ENCODE measurements at regions of chr2 and their contacts with region 1.

Region 1: GRCh38 chr2:31170071-31170698 is 31.9 kb upstream of the GALNT14 start:
- DNase-seq: peak; percentile 60
- H3K4me3 ChIP-seq: no peak overlapping the region
- H3K27ac ChIP-seq: no peak overlapping the region
- H3K4me1 ChIP-seq: no peaks in the 10 kb centered on the region
- H3K27me3 ChIP-seq: no peaks in the 10 kb centered on the region
- CTCF ChIP-seq: peak; percentile 97 to 98

Region 2: DNA sequence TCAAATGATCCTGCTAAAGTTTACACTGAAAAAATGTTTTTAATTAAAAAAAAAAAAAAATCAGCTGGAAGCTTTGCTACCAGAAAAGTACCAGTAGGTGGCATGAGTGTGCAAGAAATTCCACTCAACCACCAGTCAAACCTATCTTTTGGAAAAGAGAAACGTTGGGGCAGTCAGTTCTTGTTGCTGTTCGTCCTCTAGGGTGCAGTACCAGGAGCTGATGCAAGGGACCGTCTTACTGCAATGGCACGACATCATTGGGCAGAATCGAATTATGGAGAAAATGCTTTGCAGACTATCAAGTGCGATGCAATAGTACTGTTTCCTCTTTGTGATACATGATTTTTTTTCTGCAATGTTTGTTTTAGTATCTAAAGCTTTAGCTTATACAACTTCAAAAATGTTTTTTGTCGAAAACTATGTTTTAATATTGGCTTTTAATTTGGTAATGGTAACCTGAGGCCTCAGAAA is 1005.1 kb before region 1 on chr2:
- CTCF ChIA-PET with region 1: interaction called, 7 read pairs
- dilution Hi-C with region 1: no loop called
- in situ Hi-C with region 1: no loop called
- intact Hi-C with region 1: loop called (anchors 10 kb)
- DNase-seq: peak; percentile 80
- H3K4me3 ChIP-seq: no peak overlapping the region
- H3K27ac ChIP-seq: no peak overlapping the region
- H3K4me1 ChIP-seq: peaks cover 5% of the 10 kb centered on the region
- H3K27me3 ChIP-seq: no peaks in the 10 kb centered on the region
- CTCF ChIP-seq: peak; percentile 80 to 91

Region 3: DNA sequence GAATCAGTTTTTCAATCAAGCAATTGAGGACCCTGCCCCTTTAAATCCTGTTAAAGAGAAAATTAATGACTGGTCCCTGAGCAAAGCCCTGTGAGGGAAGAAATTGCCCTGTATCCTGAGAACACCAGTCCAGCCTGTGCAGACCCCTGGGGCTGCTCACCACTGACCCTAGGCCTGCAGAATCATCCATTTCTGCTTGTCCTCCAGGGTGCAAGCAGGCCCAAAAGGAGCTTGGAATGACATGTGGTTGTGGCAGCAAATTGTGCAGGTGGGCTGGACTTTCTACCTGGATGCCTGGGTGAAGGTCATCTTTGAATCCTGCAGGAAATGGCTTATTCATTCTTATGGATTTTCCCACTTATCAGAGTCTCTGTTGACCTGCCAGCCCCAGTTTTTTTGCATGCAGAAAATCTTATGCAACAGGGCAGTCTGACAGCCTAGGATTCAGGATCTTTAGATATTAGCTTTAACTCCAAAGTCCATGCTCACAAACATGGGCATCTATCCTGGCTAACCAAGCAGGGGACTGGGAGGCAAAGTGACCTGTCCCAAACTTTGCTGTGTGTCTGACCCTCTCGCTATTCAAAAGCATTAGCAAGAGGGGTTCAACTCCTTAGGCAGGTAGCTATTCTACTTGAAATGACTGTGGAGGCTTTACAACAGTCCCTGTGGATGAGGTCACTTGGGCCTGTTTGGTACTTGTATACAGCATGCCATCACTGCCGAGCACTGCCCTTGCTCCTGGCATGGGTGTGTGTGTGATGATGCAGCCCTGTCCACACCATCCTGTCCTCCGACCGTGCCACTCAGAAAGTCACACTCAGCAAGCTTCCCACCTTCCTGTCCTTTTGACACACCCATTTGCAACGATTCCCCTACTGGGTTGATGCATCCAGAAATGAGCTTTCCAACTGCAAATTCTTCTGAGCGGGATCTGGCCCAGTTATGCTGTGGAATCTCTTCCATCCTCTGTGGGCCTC is 448.2 kb before region 1 on chr2:
- CTCF ChIA-PET with region 1: no interaction called
- dilution Hi-C with region 1: loop called (anchors 25 kb)
- in situ Hi-C with region 1: loop called (anchors 5 to 10 kb)
- intact Hi-C with region 1: no loop called
- DNase-seq: no peak
- H3K4me3 ChIP-seq: no peak overlapping the region
- H3K27ac ChIP-seq: no peak overlapping the region
- H3K4me1 ChIP-seq: no peaks in the 10 kb centered on the region
- H3K27me3 ChIP-seq: peaks cover 5% of the 10 kb centered on the region
- CTCF ChIP-seq: no peak

Region 4: DNA sequence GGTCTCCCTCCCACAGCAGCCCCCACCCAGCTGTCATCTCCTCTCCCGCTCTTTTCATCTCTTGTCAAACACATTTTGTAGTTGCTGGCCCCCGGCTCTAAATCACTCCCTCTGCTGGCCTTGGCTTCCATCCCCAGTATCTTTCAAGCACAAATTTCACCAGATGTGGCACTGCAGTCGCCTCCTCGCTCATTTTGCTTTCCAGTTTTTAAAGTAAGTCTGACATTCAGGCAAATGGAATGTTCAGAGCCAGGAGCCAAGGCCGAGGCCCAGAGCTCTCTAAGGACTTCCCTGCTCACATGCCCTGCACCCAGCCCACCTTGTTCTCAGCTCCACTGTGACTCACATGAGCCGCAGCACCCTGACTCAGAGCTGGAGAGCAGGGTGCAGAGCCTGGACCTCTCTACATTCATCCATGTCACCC is 190.4 kb before region 1 on chr2:
- CTCF ChIA-PET with region 1: interaction called, 3 read pairs
- dilution Hi-C with region 1: no loop called
- in situ Hi-C with region 1: no loop called
- intact Hi-C with region 1: loop called (anchors 10 kb)
- DNase-seq: peak; percentile 97
- H3K4me3 ChIP-seq: no peak overlapping the region
- H3K27ac ChIP-seq: peak overlapping the region; percentile 2
- H3K4me1 ChIP-seq: peaks cover 17% of the 10 kb centered on the region
- H3K27me3 ChIP-seq: no peaks in the 10 kb centered on the region
- CTCF ChIP-seq: peak; percentile 50 to 71

Region 5: GRCh38 chr2:31079665-31080064 is 90.5 kb before region 1 on chr2:
- CTCF ChIA-PET with region 1: no interaction called
- dilution Hi-C with region 1: no loop called
- in situ Hi-C with region 1: no loop called
- intact Hi-C with region 1: no loop called
- DNase-seq: no peak
- H3K4me3 ChIP-seq: no peak overlapping the region
- H3K27ac ChIP-seq: no peak overlapping the region
- H3K4me1 ChIP-seq: peaks cover 16% of the 10 kb centered on the region
- H3K27me3 ChIP-seq: no peaks in the 10 kb centered on the region
- CTCF ChIP-seq: no peak

Region 6: GRCh38 chr2:31312898-31313297 is 142.7 kb after region 1 on chr2:
- CTCF ChIA-PET with region 1: no interaction called
- dilution Hi-C with region 1: loop called (anchors 5 kb)
- in situ Hi-C with region 1: no loop called
- intact Hi-C with region 1: no loop called
- DNase-seq: no peak
- H3K4me3 ChIP-seq: no peak overlapping the region
- H3K27ac ChIP-seq: no peak overlapping the region
- H3K4me1 ChIP-seq: no peaks in the 10 kb centered on the region
- H3K27me3 ChIP-seq: no peaks in the 10 kb centered on the region
- CTCF ChIP-seq: no peak

Region 7: DNA sequence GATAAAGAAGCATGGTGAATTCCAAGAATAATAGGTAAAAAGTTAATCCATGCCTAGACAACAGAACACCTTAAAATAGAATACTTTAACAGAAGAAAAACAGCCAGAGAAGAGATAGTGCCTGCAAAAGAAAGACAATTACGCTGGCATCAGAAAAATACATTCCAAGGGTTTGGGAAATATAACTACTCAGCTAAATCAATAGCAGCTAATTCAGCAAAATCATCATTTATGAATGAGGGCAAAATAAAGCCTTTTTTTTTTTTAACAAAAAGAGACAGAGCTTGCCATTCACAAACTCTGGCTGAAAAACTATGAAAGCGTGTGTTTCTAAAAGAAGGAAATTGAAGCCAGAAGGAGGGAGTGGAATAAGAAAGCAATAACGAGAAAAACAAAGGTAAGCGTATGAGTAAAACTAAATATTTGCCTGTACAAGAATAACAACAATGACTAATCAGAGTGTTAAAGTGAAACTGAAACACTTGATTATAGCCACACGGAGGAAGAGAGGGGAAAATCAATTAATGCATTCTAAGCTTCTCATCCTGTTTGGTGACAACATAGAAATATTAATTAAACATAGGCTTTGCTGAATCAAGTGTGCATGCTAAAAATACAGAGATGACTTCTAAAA is 153.9 kb after region 1 on chr2:
- CTCF ChIA-PET with region 1: no interaction called
- dilution Hi-C with region 1: no loop called
- in situ Hi-C with region 1: no loop called
- intact Hi-C with region 1: no loop called
- DNase-seq: peak; percentile 44
- H3K4me3 ChIP-seq: peak overlapping the region; percentile 30 to 60 (median 48)
- H3K27ac ChIP-seq: peak overlapping the region; percentile 58
- H3K4me1 ChIP-seq: peaks cover 11% of the 10 kb centered on the region
- H3K27me3 ChIP-seq: no peaks in the 10 kb centered on the region
- CTCF ChIP-seq: no peak

Region 8: GRCh38 chr2:31729764-31730092 is 559.5 kb after region 1 on chr2:
- CTCF ChIA-PET with region 1: no interaction called
- dilution Hi-C with region 1: no loop called
- in situ Hi-C with region 1: no loop called
- intact Hi-C with region 1: loop called (anchors 1 kb)
- DNase-seq: peak; percentile 66
- H3K4me3 ChIP-seq: no peak overlapping the region
- H3K27ac ChIP-seq: no peak overlapping the region
- H3K4me1 ChIP-seq: no peaks in the 10 kb centered on the region
- H3K27me3 ChIP-seq: no peaks in the 10 kb centered on the region
- CTCF ChIP-seq: peak; percentile 65 to 81